Psoas muscle (tissue), 8 donors: ENCODE measurements at regions of chr9 and their contacts with region 1.

Region 1: DNA sequence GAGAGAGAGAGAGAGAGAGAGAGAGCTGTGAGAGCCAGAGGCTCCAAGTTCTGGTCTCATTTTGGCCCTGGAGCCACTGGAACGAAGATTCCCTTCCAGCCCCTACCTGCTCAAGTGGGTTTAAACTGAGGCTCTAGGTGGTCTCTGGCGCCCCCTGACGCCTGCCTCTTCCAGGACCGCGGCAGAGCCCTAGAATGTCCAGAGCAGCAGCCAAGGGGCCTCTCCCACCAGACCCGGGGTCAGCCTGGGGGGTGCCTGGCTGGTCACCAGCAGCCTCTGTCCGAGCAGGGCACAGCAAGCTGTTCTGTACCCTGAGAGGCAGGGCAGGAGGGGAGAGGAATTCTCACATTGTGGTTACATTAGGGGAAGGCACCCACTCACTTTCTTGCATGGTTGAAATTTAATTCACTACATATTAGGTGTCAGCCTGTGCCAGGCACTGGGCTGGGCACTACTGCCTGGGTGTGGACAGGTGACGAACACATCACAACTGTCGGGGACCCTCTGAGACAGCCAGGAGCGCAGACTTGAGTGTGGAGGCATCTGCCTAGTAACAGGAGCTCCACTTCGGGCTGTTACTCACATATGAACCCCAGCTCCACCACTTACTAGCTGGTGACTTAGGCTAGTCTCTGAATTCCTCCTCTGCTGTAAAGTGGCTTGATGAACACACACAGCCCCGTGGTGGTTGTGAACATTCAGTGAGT is 44.5 kb downstream of the AMBP start:
- DNase-seq: peak; percentile 49 to 68
- ATAC-seq: peak; percentile 66 to 86 (median 79)
- H3K4me3 ChIP-seq: no peak overlapping the region
- H3K27ac ChIP-seq: no peak overlapping the region
- H3K4me1 ChIP-seq: peaks cover 5% of the 10 kb centered on the region
- H3K27me3 ChIP-seq: no peaks in the 10 kb centered on the region
- CTCF ChIP-seq: peak; percentile 64

Region 2: GRCh38 chr9:113682297-113682771 is 351.2 kb before region 1 on chr9:
- intact Hi-C with region 1: loop called (anchors 5 kb)
- DNase-seq: peak; percentile 64 to 70
- ATAC-seq: peak; percentile 49 to 69 (median 66)
- H3K4me3 ChIP-seq: no peak overlapping the region
- H3K27ac ChIP-seq: no peak overlapping the region
- H3K4me1 ChIP-seq: no peaks in the 10 kb centered on the region
- H3K27me3 ChIP-seq: peaks cover 0 to 11% (median under 1%) of the 10 kb centered on the region in 3 donors
- CTCF ChIP-seq: peak; percentile 87

Region 3: GRCh38 chr9:113687680-113688371 is 345.7 kb before region 1 on chr9:
- intact Hi-C with region 1: loop called (anchors 5 kb)
- DNase-seq: no peak
- ATAC-seq: no peak
- H3K4me3 ChIP-seq: no peak overlapping the region
- H3K27ac ChIP-seq: no peak overlapping the region
- H3K4me1 ChIP-seq: no peaks in the 10 kb centered on the region
- H3K27me3 ChIP-seq: peaks cover 4 to 33% (median 9%) of the 10 kb centered on the region in 3 donors
- CTCF ChIP-seq: no peak

Region 4: DNA sequence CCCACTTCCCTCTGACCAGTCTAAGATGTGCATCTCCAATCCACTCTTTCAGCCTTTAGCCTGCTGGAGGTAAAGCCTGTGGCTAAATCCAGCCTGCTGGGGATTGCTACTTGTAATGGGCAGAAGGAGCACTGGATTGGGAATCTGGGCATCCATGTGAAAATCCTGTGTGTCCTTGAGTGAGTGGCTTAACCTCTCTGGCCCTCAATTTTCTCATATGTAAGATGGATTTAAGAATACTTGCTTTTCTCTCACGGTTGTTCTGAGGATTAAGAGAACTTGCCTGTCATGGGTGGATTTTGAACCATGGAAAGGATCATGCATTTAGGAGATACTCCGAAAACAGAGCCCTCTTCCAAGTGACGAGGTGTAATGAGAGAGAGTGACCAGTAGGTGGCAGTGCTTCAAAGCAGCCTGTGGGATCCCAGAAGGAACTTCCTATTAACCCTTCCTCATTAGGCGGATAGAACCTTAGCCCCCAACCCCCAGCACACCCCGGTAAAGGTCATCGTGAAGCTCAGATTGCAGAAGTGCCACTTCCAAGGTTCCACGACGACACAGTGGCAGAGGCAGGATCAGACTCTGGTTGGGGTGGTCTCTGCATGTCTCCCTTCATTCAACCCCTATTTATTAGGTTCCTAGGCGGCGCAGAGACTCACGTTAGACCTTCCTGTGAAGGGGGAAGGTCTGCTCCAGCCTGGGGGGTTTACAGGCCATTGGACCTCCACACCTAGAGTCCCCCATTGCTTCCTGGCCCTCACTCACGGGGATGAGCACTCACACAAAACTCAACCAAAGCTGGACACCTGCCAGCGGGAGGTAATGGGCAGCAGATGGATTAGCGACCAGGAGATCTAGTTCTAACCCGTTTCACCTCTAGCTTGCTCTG is 226.1 kb before region 1 on chr9:
- intact Hi-C with region 1: loop called (anchors 2 kb)
- DNase-seq: peak in 1 of 2 donors; percentile 30
- ATAC-seq: peak; percentile 78 to 91 (median 82)
- H3K4me3 ChIP-seq: peak overlapping the region; percentile 51
- H3K27ac ChIP-seq: no peak overlapping the region
- H3K4me1 ChIP-seq: no peaks in the 10 kb centered on the region
- H3K27me3 ChIP-seq: no peaks in the 10 kb centered on the region
- CTCF ChIP-seq: peak; percentile 93